A549 (cell line): ENCODE measurements at regions of chr9 and their contacts with region 1.

Region 1: DNA sequence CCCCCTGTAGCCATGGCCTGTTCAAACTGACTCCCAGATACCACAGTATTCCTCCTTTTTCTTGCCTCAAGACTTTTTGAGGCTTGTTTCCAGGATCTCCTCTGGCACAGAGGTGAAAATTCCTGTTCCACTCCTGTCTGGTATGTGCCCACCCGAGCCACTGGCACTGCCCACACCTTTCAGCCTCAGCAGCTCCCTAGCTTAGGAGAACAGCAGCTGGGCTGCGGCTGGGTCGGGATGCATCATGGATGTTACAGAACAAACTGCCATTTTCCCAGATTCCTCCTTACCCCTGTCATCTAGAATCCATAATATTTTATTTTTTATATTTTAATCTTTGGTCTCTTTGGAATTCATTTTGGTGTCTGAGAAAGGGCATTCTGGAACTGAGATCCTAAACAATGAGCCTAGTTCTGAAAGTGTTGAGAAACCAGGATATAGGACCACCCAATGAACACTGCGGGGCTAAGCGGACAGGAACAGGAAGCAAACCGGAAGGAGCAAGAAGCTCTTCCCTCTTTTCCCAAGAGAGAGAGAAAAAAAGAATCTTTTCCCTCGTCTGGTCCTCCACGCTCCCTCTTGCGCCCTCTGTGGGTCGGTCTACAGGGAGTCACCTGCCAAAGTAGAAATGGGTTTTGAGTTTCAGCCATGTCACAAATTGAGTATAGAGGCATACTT is 12.5 kb downstream of the OR2S2 start:
- DNase-seq: peak; percentile 90 to 94
- ATAC-seq: peak; percentile 84 to 95
- H3K4me3 ChIP-seq: peak overlapping the region; percentile 32
- H3K27ac ChIP-seq: peak overlapping the region; percentile 52 to 78
- H3K4me1 ChIP-seq: peaks cover 4% of the 10 kb centered on the region; the same call in 1 of the 3 replicates
- CTCF ChIP-seq: peak; percentile 80
- EP300 ChIP-seq: no peak
- POLR2A ChIP-seq: no peak
- RAD21 ChIP-seq: peak; percentile 65 to 68

Region 2: GRCh38 chr9:35871497-35871896 is 74.0 kb before region 1 on chr9:
- CTCF ChIA-PET with region 1: no interaction called
- POLR2A ChIA-PET with region 1: no interaction called
- DNase-seq: no peak
- ATAC-seq: 0 out of 6 replicates have a peak, but pooled peaks of 1 of the 2 experiments have one; percentile 35
- H3K4me3 ChIP-seq: no peak overlapping the region
- H3K27ac ChIP-seq: no peak overlapping the region
- H3K4me1 ChIP-seq: peaks cover 2% of the 10 kb centered on the region; the same call in 1 of the 3 replicates
- CTCF ChIP-seq: no peak
- EP300 ChIP-seq: no peak
- POLR2A ChIP-seq: no peak
- RAD21 ChIP-seq: no peak

Region 3: DNA sequence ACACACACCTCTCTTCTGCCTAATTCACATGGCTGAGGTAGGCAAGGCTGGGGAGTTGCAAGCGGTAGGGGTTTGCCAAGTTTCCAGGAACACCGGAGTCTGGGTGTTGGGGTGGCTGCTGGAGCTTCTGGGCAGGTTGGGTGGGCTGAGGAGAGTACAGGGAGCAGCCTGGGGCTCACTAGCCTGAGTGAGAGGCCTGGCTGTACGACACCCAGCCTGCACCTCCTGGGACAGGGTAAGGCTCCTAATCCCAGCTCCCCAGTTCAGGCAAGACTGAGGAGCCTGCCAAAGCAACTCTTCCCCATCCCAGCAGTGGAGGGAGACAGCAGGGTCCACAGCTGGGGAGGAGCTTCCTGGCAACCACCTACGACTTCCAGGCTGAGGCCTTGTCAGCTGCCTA is 28.2 kb before region 1 on chr9:
- CTCF ChIA-PET with region 1: interaction called, 243 read pairs
- POLR2A ChIA-PET with region 1: no interaction called
- DNase-seq: no peak
- ATAC-seq: peak in 1 of 2 experiments; percentile 15; a peak in 4 of 6 replicates
- H3K4me3 ChIP-seq: no peak overlapping the region
- H3K27ac ChIP-seq: peak overlapping the region in 1 of 2 experiments; percentile 56; a peak in 3 of 6 replicates
- H3K4me1 ChIP-seq: 0 out of 3 replicates have a peak, but pooled peaks cover 5% of the 10 kb centered on the region
- CTCF ChIP-seq: no peak
- EP300 ChIP-seq: no peak
- POLR2A ChIP-seq: no peak
- RAD21 ChIP-seq: no peak